Naive thymus-derived CD4-positive, alpha-beta T cell (primary cell): ENCODE measurements at regions of chr5 and their contacts with region 1.

Region 1: GRCh38 chr5:157026789-157027424 is 32.0 kb downstream of the HAVCR1 start:
- DNase-seq: no peak
- ATAC-seq: no peak
- H3K4me3 ChIP-seq: no peak overlapping the region
- H3K4me3 Mint-ChIP-seq: peak overlapping the region in 1 of 10 donors; percentile 21
- H3K27ac ChIP-seq: no peak overlapping the region
- H3K27ac Mint-ChIP-seq: peak overlapping the region in 3 of 9 donors; percentile 41 to 89 (median 51)
- H3K4me1 ChIP-seq: peaks cover 16 to 23% of the 10 kb centered on the region in 2 donors
- H3K4me1 Mint-ChIP-seq: peaks cover 15 to 91% (median 30%) of the 10 kb centered on the region in 7 donors
- H3K27me3 ChIP-seq: no peaks in the 10 kb centered on the region
- H3K27me3 Mint-ChIP-seq: no peaks in the 10 kb centered on the region

Region 2: GRCh38 chr5:156835905-156836304 is 191.0 kb before region 1 on chr5:
- CTCF ChIA-PET with region 1: no interaction called
- POLR2A ChIA-PET with region 1: no interaction called
- intact Hi-C with region 1: loop called in 1 of 2 experiments (anchors 5 kb)
- DNase-seq: no peak
- ATAC-seq: no peak
- H3K4me3 ChIP-seq: no peak overlapping the region
- H3K4me3 Mint-ChIP-seq: no peak overlapping the region
- H3K27ac ChIP-seq: no peak overlapping the region
- H3K27ac Mint-ChIP-seq: no peak overlapping the region
- H3K4me1 ChIP-seq: no peaks in the 10 kb centered on the region
- H3K4me1 Mint-ChIP-seq: peaks cover 0 to 9% (median 0%) of the 10 kb centered on the region in 7 donors
- H3K27me3 ChIP-seq: no peaks in the 10 kb centered on the region
- H3K27me3 Mint-ChIP-seq: no peaks in the 10 kb centered on the region

Region 3: DNA sequence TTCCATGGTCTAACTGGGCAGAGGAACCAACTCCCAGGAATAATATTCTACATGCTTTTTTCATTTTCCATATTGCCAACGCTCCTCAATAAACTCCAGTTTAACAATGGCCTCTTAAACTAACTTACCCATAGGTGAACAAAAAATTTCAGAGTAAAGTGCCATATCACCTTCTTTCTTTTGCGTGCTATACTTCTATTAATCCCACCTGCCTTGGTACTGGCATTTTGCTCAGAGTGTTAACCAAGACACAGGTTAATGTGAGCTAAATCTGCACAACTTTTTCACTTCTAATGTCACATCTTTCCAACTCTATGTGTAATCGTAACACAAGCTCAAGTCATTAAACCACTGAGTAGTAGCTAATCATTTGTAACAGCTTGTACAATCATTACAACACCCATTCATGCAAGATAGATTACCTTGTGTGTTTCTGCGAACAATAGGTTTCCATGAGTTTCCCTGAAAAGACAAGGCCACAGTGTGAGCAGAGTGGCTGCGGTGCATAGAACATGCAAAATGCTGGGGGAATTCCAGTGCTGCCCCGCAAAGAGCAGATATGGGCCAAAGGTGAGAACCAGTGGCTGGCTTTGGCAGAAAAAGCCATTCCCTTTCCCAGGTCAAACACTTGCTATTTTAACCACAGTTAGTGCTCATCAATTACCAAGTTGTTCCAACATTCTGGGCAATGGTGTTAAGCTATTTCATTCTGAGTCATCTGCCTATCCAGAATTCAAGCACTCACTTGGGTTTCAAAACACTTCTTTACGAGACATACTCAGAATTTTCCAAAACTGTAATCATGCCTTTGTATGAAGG is 106.7 kb before region 1 on chr5:
- CTCF ChIA-PET with region 1: interaction called, 3 read pairs
- POLR2A ChIA-PET with region 1: interaction called, 4 read pairs
- intact Hi-C with region 1: loop called in 1 of 2 experiments (anchors 1 kb)
- DNase-seq: peak in 1 of 9 donors; percentile 76
- ATAC-seq: peak; percentile 46
- H3K4me3 ChIP-seq: no peak overlapping the region
- H3K4me3 Mint-ChIP-seq: peak overlapping the region in 1 of 10 donors; percentile 79
- H3K27ac ChIP-seq: no peak overlapping the region
- H3K27ac Mint-ChIP-seq: peak overlapping the region in 7 of 9 donors; percentile 18 to 94 (median 52)
- H3K4me1 ChIP-seq: peaks cover 9 to 10% of the 10 kb centered on the region in 2 donors
- H3K4me1 Mint-ChIP-seq: peaks cover 12 to 78% (median 67%) of the 10 kb centered on the region in 7 donors
- H3K27me3 ChIP-seq: no peaks in the 10 kb centered on the region
- H3K27me3 Mint-ChIP-seq: no peaks in the 10 kb centered on the region

Region 4: DNA sequence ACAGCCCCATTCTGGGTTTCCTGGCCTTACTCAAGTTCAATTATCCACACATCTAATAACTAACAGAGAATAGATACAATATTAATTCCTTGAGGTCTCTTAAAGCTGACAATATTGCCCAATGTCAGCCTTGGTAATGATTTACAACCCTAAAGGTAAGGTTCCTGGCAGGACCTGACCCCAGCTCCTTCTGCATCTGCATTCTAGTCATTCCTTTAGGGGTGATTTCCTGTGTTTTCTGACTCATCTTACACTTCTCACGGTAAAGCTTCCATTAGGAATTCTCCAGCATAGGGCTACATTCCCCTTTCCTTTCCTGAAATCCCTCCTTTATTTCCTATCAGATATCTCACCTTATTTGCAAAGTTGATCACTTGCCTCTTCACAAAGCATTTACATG is 22.7 kb after region 1 on chr5:
- CTCF ChIA-PET with region 1: no interaction called
- POLR2A ChIA-PET with region 1: no interaction called
- intact Hi-C with region 1: loop called in 1 of 2 experiments (anchors 2 kb)
- DNase-seq: no peak
- ATAC-seq: no peak
- H3K4me3 ChIP-seq: peak overlapping the region; percentile 49
- H3K4me3 Mint-ChIP-seq: peak overlapping the region; percentile 81 to 92 (median 88)
- H3K27ac ChIP-seq: peak overlapping the region; percentile 53
- H3K27ac Mint-ChIP-seq: peak overlapping the region; percentile 87 to 97 (median 93)
- H3K4me1 ChIP-seq: peaks cover 0 to 28% of the 10 kb centered on the region in 2 donors
- H3K4me1 Mint-ChIP-seq: peaks cover 16 to 79% (median 66%) of the 10 kb centered on the region in 7 donors
- H3K27me3 ChIP-seq: no peaks in the 10 kb centered on the region
- H3K27me3 Mint-ChIP-seq: no peaks in the 10 kb centered on the region

Region 5: GRCh38 chr5:157108976-157109375 is 82.1 kb after region 1 on chr5 and contains the start of gene HAVCR2:
- CTCF ChIA-PET with region 1: no interaction called
- POLR2A ChIA-PET with region 1: no interaction called
- intact Hi-C with region 1: loop called (anchors 1 to 5 kb)
- DNase-seq: peak; percentile 20 to 73 (median 57)
- ATAC-seq: peak; percentile 90
- H3K4me3 ChIP-seq: peak within 1 kb of the TSS; percentile 27
- H3K4me3 Mint-ChIP-seq: peak within 1 kb of the TSS; percentile 81 to 97 (median 85)
- H3K27ac ChIP-seq: peak within 1 kb of the TSS; percentile 55
- H3K27ac Mint-ChIP-seq: peak within 1 kb of the TSS; percentile 82 to 96 (median 92)
- H3K4me1 ChIP-seq: peaks cover 19 to 22% of the 10 kb centered on the region in 2 donors
- H3K4me1 Mint-ChIP-seq: peaks cover 16 to 68% (median 47%) of the 10 kb centered on the region in 7 donors
- H3K27me3 ChIP-seq: no peaks in the 10 kb centered on the region
- H3K27me3 Mint-ChIP-seq: no peaks in the 10 kb centered on the region
- total RNA-seq, gene HAVCR2: 5.1 to 110 (median 5.5) TPM

Region 6: DNA sequence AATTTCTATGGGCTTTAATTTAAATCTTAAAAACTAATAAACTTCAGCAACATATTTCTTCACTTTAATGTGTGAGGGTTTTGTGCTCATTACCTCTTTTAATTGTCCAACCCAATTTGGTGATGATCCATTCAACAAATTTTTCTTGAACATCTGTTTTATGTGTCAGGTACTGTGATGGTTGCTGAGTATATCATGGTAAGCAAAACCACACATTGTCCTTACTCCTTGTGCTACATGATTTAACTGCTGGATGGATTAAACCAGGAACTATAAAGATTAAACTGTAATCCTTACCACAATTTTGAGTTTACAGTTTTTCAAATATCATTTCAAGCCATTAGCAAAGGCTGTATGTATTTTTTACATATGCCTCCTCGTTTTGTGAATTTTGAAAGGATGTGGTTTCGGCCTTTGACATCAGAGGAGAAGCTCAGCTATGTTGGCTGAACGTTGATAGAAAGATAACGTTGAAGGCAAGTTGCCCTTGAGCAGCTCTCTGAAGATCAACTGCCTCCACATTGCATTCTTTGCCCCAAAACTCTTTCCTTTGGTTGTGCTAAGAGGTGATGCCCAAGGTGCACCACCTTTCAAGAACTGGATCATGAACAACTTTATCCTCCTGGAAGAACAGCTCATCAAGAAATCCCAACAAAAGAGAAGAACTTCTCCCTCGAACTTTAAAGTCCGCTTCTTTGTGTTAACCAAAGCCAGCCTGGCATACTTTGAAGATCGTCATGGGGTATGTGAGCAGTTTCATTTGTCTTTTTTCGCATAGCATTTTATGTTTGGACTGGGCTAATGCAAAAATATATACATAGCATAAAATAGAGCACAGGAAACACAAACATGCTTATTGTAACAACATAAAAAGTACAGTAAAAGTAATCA is 153.7 kb after region 1 on chr5 and contains the start of gene ITK:
- CTCF ChIA-PET with region 1: no interaction called
- POLR2A ChIA-PET with region 1: no interaction called
- intact Hi-C with region 1: loop called in 1 of 2 experiments (anchors 5 kb)
- DNase-seq: peak in 7 of 9 donors; percentile 66 to 84 (median 77)
- ATAC-seq: peak; percentile 88
- H3K4me3 ChIP-seq: peak within 1 kb of the TSS; percentile 62
- H3K4me3 Mint-ChIP-seq: peak within 1 kb of the TSS; percentile 89 to 100 (median 97)
- H3K27ac ChIP-seq: peak within 1 kb of the TSS; percentile 81
- H3K27ac Mint-ChIP-seq: peak within 1 kb of the TSS; percentile 91 to 99 (median 96)
- H3K4me1 ChIP-seq: peaks cover 33 to 42% of the 10 kb centered on the region in 2 donors
- H3K4me1 Mint-ChIP-seq: peaks cover 27 to 61% (median 50%) of the 10 kb centered on the region in 7 donors
- H3K27me3 ChIP-seq: no peaks in the 10 kb centered on the region
- H3K27me3 Mint-ChIP-seq: no peaks in the 10 kb centered on the region
- total RNA-seq, gene ITK: 278 to 481 (median 324) TPM